Mammary epithelial cell (primary cell): ENCODE measurements at regions of chr17 and their contacts with region 1.

Region 1: DNA sequence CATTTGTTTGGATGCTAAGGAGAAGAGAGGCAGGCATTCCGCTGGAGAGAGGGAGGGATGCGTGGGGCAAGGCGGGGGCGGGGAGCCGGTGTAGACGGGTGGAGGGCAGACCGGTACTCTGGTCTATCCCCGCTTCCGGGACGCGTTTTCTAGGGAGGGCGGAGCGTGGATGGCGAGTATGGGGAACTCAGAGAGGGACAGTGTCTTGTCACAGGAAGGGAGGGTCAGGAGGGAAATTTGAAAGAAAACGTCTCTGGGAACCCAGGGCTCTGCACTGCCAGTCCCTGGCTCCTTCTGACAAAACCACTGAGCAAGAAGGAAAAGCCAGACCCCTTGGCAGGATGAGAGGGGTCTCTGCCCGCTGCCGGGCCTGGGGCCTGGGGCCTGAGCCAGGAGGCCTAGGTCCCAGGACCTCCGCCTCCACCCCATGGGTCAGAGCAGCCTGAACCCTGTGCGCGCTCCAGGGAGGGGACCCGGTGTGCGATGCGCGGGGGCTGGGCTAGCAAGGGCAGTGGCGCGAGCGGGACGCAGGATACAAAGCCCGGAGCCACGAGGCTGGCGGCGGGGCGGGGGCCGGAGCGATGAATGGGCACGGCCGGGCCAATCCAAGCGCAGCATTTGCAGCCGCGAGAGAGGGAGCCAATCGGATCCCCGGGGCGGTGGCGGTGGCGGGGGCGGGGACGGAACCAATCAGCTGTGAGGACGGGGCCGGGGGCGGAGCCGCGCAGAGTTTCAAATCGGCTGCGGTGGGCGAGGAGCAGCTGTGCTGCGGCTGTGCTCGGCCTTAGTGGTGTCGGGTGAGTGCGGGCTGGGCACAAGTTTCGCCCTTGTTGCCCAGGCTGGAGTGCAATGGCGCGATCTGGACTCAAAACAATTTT is at the start of gene PIMREG:
- DNase-seq: peak; percentile 92
- H3K4me3 ChIP-seq: peak within 1 kb of the TSS; percentile 67 to 75 (median 74)
- H3K27ac ChIP-seq: peak within 1 kb of the TSS; percentile 62
- H3K4me1 ChIP-seq: peaks cover 17% of the 10 kb centered on the region
- H3K27me3 ChIP-seq: no peaks in the 10 kb centered on the region
- CTCF ChIP-seq: no peak
- total RNA-seq, gene PIMREG: 0.83 to 18.4 TPM

Region 2: GRCh38 chr17:6374761-6375312 is 69.1 kb before region 1 on chr17:
- CTCF ChIA-PET with region 1: no interaction called
- dilution Hi-C with region 1: loop called (anchors 10 kb)
- in situ Hi-C with region 1: no loop called
- intact Hi-C with region 1: no loop called
- DNase-seq: peak; percentile 93
- H3K4me3 ChIP-seq: peak overlapping the region in 1 of 3 experiments; percentile 1
- H3K27ac ChIP-seq: peak overlapping the region; percentile 74
- H3K4me1 ChIP-seq: peaks cover 19% of the 10 kb centered on the region
- H3K27me3 ChIP-seq: no peaks in the 10 kb centered on the region
- CTCF ChIP-seq: no peak